Heart right ventricle (tissue), 16 donors: ENCODE measurements at regions of chr13 and their contacts with region 1.

Region 1: DNA sequence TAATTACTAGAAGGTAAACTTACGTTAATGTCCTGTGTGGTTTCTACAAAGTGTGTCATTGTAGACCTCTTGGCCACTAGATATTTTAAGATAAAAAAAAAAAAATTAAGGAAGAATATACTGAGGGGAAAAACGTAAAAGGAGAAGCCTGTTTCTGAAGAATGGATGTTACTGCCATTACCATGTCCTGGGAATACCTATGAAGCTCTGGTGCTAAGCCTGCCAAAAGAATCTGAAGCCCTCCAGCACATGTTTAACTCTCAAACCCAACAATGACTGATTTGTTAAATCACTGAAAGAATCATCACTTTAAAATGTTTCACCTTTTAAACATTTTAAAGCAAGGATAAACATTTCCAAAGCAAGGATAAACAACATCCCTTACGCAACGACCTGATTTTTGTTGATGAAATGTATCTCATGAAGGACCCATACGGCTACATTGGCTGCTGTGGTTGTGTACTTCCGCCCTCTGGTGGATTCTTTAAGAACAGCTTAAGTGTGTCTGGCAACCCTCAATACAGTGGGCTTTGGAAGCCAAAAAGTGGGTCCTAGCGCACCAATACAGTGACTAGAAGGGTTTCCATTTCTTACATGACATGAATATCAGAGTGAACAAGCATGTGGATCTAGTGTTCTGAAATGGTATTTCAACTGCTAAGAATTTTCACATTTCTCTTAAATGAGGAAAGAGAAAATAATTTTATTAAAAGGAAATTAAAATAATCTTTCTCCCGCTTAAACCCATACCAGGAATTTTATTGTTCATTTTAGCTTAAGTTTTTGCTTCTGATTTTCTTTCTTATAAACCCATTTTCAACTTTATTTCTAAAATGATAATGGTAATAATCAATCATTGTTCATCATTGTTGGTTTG is 74.5 kb upstream of the RAP2A start:
- DNase-seq: peak in 1 of 2 donors; percentile 62
- ATAC-seq: peak; percentile 76 to 93 (median 89)
- H3K4me3 ChIP-seq: no peak overlapping the region
- H3K27ac ChIP-seq: peak overlapping the region in 4 of 10 donors; percentile 2 to 38 (median 18)
- H3K4me1 ChIP-seq: peaks cover 0 to 54% (median 26%) of the 10 kb centered on the region in 9 donors
- H3K27me3 ChIP-seq: no peaks in the 10 kb centered on the region
- CTCF ChIP-seq: peak; percentile 67 to 94 (median 87)

Region 2: DNA sequence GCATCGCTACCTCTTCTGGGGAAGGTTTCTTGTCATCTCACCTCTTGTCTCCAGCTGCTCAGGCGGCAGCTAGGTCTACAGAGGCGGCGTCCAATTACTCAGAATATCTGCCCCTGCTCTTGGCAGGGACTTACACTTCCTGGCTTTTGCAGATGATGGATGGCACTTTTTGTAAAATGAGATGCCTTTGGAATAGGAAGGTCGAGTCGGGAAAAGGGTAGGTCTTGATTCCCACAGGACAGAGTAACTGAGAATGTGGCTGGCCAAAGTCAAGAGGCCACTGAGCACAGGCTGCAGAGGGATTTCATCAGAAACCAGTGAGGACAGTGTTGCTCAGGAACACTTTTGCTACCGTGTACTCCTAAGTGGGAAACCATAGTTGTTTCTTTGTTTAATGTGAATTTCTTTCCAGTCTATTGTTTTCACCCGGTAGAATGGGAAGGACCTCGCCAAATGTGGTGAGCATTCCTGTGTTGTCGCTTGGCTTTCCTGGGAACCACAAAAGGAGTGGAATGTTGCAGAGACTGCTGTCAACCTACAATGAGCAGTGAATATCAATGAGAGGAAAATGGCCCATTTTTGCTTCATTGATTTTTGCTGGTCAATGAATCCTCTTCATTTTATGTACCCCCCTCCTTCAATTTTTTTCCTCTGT is 885.8 kb before region 1 on chr13:
- intact Hi-C with region 1: no loop called
- DNase-seq: no peak
- ATAC-seq: peak in 2 of 8 donors; percentile 29 to 48
- H3K4me3 ChIP-seq: no peak overlapping the region
- H3K27ac ChIP-seq: peak overlapping the region in 2 of 10 donors; percentile 25 to 35
- H3K4me1 ChIP-seq: peaks cover 0 to 12% (median 0%) of the 10 kb centered on the region in 9 donors
- H3K27me3 ChIP-seq: peaks cover 0 to 4% (median 0%) of the 10 kb centered on the region in 7 donors
- CTCF ChIP-seq: no peak

Region 3: GRCh38 chr13:97018029-97018831 is 341.2 kb before region 1 on chr13:
- intact Hi-C with region 1: loop called in 6 of 10 experiments (anchors 5 to 10 kb)
- DNase-seq: peak in 1 of 2 donors; percentile 37
- ATAC-seq: peak in 7 of 8 donors; percentile 47 to 70 (median 61)
- H3K4me3 ChIP-seq: no peak overlapping the region
- H3K27ac ChIP-seq: no peak overlapping the region
- H3K4me1 ChIP-seq: peaks cover 0 to 6% (median 0%) of the 10 kb centered on the region in 9 donors
- H3K27me3 ChIP-seq: peaks cover 0 to 46% (median 0%) of the 10 kb centered on the region in 7 donors
- CTCF ChIP-seq: peak; percentile 82 to 94 (median 89)

Region 4: DNA sequence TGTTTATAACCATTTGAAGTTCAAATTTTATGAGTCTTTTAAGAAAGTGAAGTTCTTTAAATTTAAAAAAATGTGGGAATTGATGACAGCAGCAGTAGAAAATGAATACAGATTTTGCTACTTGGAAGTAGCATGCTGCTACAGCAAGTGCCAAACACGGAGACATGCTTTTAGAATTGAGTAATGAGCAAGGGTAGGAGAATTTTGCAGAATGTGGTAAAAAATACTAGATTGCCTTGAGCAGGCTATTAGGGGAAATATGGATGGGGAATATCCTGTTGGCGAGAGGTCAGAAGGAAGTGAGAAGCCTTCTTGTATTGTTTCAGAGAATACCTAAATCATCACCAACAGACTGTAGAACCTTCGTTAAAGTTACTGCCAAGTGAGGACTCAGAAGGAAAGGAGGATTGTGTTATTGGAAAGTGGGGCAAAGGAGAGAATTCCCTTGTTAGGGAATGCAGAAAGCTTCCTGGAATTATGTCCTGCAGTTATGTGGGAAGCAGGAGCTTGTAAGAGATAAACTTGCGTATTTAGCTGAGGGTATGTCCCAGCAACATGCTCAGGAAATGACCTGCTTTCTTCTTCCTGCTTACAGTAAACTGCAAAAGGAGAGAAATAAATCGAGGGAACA is 332.8 kb before region 1 on chr13:
- intact Hi-C with region 1: loop called in 5 of 10 experiments (anchors 5 to 10 kb)
- DNase-seq: no peak
- ATAC-seq: peak in 4 of 8 donors; percentile 28 to 49 (median 37)
- H3K4me3 ChIP-seq: no peak overlapping the region
- H3K27ac ChIP-seq: peak overlapping the region in 3 of 10 donors; percentile 11 to 45 (median 16)
- H3K4me1 ChIP-seq: peaks cover 0 to 25% (median 11%) of the 10 kb centered on the region in 9 donors
- H3K27me3 ChIP-seq: peaks cover 0 to 12% (median 0%) of the 10 kb centered on the region in 7 donors
- CTCF ChIP-seq: no peak

Region 5: DNA sequence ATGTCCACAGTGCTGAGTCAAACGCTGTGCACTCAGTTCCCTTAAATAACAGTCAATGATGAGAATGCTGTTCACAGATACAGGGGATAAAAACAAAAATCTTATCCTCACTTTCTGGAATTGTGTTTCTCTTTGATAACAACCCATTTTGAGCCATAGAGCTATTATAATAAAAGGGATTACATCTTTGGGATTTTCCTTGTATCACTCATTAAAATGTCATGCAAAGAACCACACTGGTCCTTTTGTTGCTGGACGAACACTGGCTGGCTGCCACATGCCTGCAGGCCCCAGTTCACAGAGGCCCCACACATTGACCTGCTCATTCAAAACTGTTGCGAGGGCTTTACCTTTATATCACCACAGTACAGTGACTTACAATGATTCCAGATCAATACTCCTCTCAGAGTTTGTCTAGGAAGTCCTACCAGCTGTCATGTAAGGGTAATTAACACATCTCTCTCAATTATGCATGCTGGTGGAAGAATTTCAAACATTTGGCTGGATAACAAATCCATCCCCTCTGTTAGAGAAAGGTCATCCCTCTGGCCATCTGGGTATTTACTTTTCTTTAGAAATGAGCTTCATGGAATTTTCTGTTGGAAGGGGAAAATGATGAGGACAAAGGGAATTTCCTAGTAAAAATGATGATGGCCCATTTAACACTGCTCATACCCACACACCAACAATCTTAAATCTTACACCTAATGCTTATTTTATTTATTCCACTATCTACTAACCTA is 51.4 kb before region 1 on chr13:
- intact Hi-C with region 1: loop called in 1 of 10 experiments (anchors 10 kb)
- DNase-seq: peak; percentile 44 to 48
- ATAC-seq: peak; percentile 41 to 77 (median 60)
- H3K4me3 ChIP-seq: no peak overlapping the region
- H3K27ac ChIP-seq: peak overlapping the region in 9 of 10 donors; percentile 22 to 74 (median 38)
- H3K4me1 ChIP-seq: peaks cover 10 to 88% (median 42%) of the 10 kb centered on the region in 9 donors
- H3K27me3 ChIP-seq: no peaks in the 10 kb centered on the region
- CTCF ChIP-seq: no peak

Region 6: GRCh38 chr13:97432917-97433726 is 73.7 kb after region 1 on chr13:
- intact Hi-C with region 1: loop called in 2 of 10 experiments (anchors 5 kb)
- DNase-seq: peak; percentile 98 to 99
- ATAC-seq: peak; percentile 91 to 98 (median 94)
- H3K4me3 ChIP-seq: peak overlapping the region; percentile 66 to 98 (median 84)
- H3K27ac ChIP-seq: peak overlapping the region; percentile 95 to 100 (median 99)
- H3K4me1 ChIP-seq: peaks cover 0 to 54% (median 37%) of the 10 kb centered on the region in 9 donors
- H3K27me3 ChIP-seq: no peaks in the 10 kb centered on the region
- CTCF ChIP-seq: no peak

Region 7: DNA sequence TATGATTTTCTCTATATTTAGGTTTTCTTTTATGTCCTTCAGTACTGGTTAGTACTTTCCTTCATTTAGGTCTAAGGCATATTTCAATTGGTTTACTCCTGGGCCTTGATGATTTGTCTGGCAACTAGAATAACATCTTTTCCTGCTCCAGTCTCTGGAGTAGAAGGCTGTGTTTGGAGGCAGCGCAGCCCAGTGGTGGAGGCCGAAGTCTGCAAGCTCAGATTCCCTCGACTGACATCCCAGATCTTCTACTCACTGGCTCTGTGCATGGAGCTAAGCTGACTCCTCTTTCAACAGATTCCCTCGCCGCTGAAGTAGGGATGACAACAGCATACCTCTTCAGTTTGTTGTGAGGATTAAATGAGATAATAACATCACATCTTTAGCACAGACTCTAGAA is 215.5 kb after region 1 on chr13:
- intact Hi-C with region 1: loop called in 2 of 10 experiments (anchors 10 kb)
- DNase-seq: peak; percentile 9 to 27
- ATAC-seq: peak in 5 of 8 donors; percentile 42 to 68 (median 58)
- H3K4me3 ChIP-seq: no peak overlapping the region
- H3K27ac ChIP-seq: no peak overlapping the region
- H3K4me1 ChIP-seq: peaks cover 0 to 3% (median 0%) of the 10 kb centered on the region in 9 donors
- H3K27me3 ChIP-seq: no peaks in the 10 kb centered on the region
- CTCF ChIP-seq: peak in 8 of 9 donors; percentile 36 to 65 (median 44)

Region 8: DNA sequence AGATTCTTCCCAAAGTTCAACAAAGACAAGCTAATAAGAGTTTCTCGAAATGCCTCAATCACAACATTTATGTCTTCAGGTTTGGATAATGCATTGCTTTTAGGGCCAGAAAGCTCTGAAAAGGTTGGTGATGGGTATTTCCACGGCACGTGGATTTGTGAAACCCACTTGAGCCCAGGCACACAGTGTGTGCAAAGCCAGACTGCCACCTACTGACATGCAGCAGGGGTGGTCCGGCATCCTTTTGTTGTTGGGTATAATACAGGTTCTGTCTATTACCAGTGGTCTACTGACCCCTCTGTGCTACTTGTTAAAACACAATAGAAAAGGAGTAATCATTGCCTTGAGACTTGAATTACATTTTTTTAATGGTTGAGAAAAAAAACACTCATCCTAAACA is 300.2 kb after region 1 on chr13:
- intact Hi-C with region 1: loop called in 1 of 10 experiments (anchors 10 kb)
- DNase-seq: peak in 1 of 2 donors; percentile 6
- ATAC-seq: peak in 5 of 8 donors; percentile 37 to 76 (median 74)
- H3K4me3 ChIP-seq: no peak overlapping the region
- H3K27ac ChIP-seq: no peak overlapping the region
- H3K4me1 ChIP-seq: peaks cover 0 to 40% (median 3%) of the 10 kb centered on the region in 9 donors
- H3K27me3 ChIP-seq: no peaks in the 10 kb centered on the region
- CTCF ChIP-seq: peak in 8 of 9 donors; percentile 25 to 67 (median 49)

Region 9: DNA sequence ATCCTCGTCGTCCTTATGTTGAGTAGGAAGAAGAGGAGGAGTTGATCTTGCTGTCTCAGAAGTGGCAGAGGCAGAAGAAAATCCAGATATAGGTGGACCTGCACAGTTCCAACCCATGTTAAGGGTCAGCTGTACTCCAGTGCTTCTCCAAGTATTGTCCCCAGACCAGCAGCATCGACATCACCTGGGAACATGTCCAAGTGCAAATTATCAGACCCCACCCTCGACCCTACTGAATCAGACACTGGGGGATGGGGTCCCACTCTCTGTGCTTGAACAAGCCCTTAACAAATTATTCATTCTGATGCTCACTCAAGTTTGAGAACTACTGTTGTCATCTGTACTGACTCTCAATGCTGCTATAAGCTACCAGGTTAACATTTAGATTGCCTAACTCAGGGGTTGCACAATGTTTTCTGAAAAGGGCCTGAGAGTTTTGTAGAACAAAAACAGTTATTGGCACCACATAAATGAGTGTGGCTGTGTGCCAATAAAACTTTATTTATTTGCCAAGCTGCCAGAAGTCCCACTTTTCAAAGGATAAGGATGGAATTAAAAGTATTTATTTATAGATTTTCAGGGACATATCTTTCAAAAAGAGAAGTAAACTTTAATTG is 367.4 kb after region 1 on chr13:
- intact Hi-C with region 1: no loop called
- DNase-seq: no peak
- ATAC-seq: peak in 2 of 8 donors; percentile 14 to 16
- H3K4me3 ChIP-seq: no peak overlapping the region
- H3K27ac ChIP-seq: no peak overlapping the region
- H3K4me1 ChIP-seq: no peaks in the 10 kb centered on the region
- H3K27me3 ChIP-seq: no peaks in the 10 kb centered on the region
- CTCF ChIP-seq: no peak